ENCODE measurements at regions of chr11 and their contacts with region 1.

Region 1: DNA sequence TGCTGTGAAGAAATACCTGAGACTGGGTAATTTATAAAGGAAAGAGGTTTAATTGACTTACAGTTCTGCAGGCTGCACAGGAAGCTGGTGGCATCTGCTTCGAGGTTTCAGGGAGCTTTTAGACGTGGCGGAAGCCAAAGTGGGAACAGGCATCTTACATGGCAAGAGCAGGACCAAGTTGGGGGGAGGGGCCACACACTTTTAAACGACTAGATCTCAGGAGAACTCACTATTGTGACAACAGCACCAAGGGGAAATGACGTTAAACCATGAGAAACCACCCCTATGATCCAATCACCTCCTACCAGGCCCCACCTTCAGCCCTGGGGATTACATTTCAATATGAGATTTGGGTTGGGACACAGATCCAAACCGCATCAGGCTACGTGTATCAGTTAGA is 11.1 kb upstream of the SCGB1D4 start:
- DNase-seq: no peak
- H3K4me3 ChIP-seq: no peak overlapping the region
- H3K27me3 ChIP-seq: peaks cover 5% of the 10 kb centered on the region
- CTCF ChIP-seq: no peak

Region 2: GRCh38 chr11:62186195-62186594 is 123.8 kb before region 1 on chr11:
- CTCF ChIA-PET with region 1: no interaction called
- POLR2A ChIA-PET with region 1: no interaction called
- DNase-seq: no peak
- H3K4me3 ChIP-seq: no peak overlapping the region
- H3K27me3 ChIP-seq: peaks cover 5% of the 10 kb centered on the region
- CTCF ChIP-seq: no peak

Region 3: DNA sequence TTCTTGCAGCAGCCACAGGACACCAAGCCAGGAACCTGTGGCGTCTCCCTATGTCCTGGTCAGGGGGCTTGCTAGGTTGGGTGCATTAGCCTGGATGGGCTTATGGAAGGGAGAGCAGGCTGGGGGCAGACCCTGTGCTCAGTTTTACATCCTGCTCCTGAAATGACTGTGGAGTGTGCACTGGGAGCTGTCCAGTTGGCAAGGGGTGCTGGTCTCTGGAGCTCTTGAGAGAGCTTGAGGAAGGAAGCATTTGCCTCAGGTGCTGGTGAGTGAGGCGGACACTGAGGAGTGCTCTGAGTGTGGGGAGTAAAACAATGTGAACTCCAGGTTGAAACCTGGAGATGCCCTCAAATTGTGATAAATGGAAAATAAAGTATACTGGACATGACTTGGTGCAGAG is 14.5 kb before region 1 on chr11:
- CTCF ChIA-PET with region 1: interaction called, 13 read pairs
- POLR2A ChIA-PET with region 1: no interaction called
- DNase-seq: no peak
- H3K4me3 ChIP-seq: no peak overlapping the region
- H3K27me3 ChIP-seq: no peaks in the 10 kb centered on the region; the same call in none of the 2 replicates
- CTCF ChIP-seq: no peak

Region 4: GRCh38 chr11:62322524-62322923 is 12.5 kb after region 1 on chr11:
- CTCF ChIA-PET with region 1: interaction called, 33 read pairs
- POLR2A ChIA-PET with region 1: no interaction called
- DNase-seq: no peak
- H3K4me3 ChIP-seq: no peak overlapping the region
- H3K27me3 ChIP-seq: peaks cover 3% of the 10 kb centered on the region; the same call in 1 of the 2 replicates
- CTCF ChIP-seq: no peak